ENCODE measurements at regions of chr14 and their contacts with region 1.

Region 1: GRCh38 chr14:24299255-24300195 is at the starts of genes DHRS1 and NOP9:
- DNase-seq: peak; percentile 46
- ATAC-seq: peak; percentile 87
- H3K4me3 ChIP-seq: peak within 1 kb of the TSS; percentile 89 to 92
- H3K27ac ChIP-seq: peak within 1 kb of the TSS; percentile 77
- H3K4me1 ChIP-seq: peaks cover 7% of the 10 kb centered on the region; the same call in 1 of the 2 replicates
- H3K27me3 ChIP-seq: no peaks in the 10 kb centered on the region
- CTCF ChIP-seq: no peak
- total RNA-seq, gene DHRS1: 8.9 TPM
- total RNA-seq, gene NOP9: 25.3 TPM

Region 2: GRCh38 chr14:22872033-22872832 is 1427.3 kb before region 1 on chr14:
- CTCF ChIA-PET with region 1: no interaction called
- POLR2A ChIA-PET with region 1: interaction called, 10 read pairs
- in situ Hi-C with region 1: no loop called
- intact Hi-C with region 1: no loop called
- DNase-seq: no peak
- ATAC-seq: peak; percentile 75
- H3K4me3 ChIP-seq: peak overlapping the region; percentile 67 to 84
- H3K27ac ChIP-seq: peak overlapping the region; percentile 80
- H3K4me1 ChIP-seq: peaks cover 8% of the 10 kb centered on the region; the same call in 1 of the 2 replicates
- H3K27me3 ChIP-seq: no peaks in the 10 kb centered on the region
- CTCF ChIP-seq: peak; percentile 93

Region 3: GRCh38 chr14:24231263-24232120 is 68.0 kb before region 1 on chr14:
- CTCF ChIA-PET with region 1: interaction called, 12 read pairs
- POLR2A ChIA-PET with region 1: no interaction called
- in situ Hi-C with region 1: no loop called
- intact Hi-C with region 1: no loop called
- DNase-seq: no peak
- ATAC-seq: peak; percentile 2; the same call in 1 of the 2 replicates
- H3K4me3 ChIP-seq: peak overlapping the region; percentile 87 to 89
- H3K27ac ChIP-seq: peak overlapping the region; percentile 96
- H3K4me1 ChIP-seq: peaks cover 18% of the 10 kb centered on the region
- H3K27me3 ChIP-seq: no peaks in the 10 kb centered on the region
- CTCF ChIP-seq: no peak

Region 4: GRCh38 chr14:24241829-24242443 is 57.6 kb before region 1 on chr14:
- CTCF ChIA-PET with region 1: interaction called, 8 read pairs
- POLR2A ChIA-PET with region 1: interaction called, 6 read pairs
- in situ Hi-C with region 1: no loop called
- intact Hi-C with region 1: loop called (anchors 1 kb)
- DNase-seq: peak; percentile 72
- ATAC-seq: peak; percentile 93
- H3K4me3 ChIP-seq: peak overlapping the region; percentile 77 to 91
- H3K27ac ChIP-seq: peak overlapping the region; percentile 93
- H3K4me1 ChIP-seq: peaks cover 12% of the 10 kb centered on the region
- H3K27me3 ChIP-seq: no peaks in the 10 kb centered on the region
- CTCF ChIP-seq: no peak

Region 5: DNA sequence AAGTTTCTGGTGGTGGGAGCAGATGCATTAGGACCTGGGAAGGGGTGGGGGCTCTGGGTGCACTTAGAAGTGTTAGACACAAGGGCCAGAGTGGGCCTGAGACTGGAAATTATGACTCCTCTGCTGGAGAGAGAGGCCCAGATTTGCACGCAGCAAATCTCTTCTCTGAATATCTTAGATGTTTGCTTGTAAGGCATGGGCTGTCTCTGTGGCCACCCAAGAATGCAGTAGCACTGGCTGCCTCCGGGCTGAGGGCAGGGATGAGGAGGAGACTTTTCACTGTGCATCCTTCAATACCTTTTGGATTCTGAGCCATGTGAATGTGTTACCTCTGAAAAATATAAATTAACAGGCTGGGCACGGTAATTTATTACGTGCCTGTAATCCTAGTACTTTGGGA is 14.2 kb before region 1 on chr14:
- CTCF ChIA-PET with region 1: no interaction called
- POLR2A ChIA-PET with region 1: no interaction called
- in situ Hi-C with region 1: no loop called
- intact Hi-C with region 1: no loop called
- DNase-seq: no peak
- ATAC-seq: no peak
- H3K4me3 ChIP-seq: no peak overlapping the region
- H3K27ac ChIP-seq: no peak overlapping the region
- H3K4me1 ChIP-seq: no peaks in the 10 kb centered on the region
- H3K27me3 ChIP-seq: no peaks in the 10 kb centered on the region
- CTCF ChIP-seq: no peak